ENCODE measurements at regions of chr19 and their contacts with region 1.

Region 1: GRCh38 chr19:17470068-17470841 is at the start of gene SLC27A1:
- DNase-seq: peak; percentile 98
- H3K4me3 ChIP-seq: peak within 1 kb of the TSS; percentile 93
- H3K27ac ChIP-seq: peak within 1 kb of the TSS; percentile 97
- H3K4me1 ChIP-seq: peaks cover 68% of the 10 kb centered on the region
- H3K27me3 ChIP-seq: no peaks in the 10 kb centered on the region
- CTCF ChIP-seq: no peak
- total RNA-seq, gene SLC27A1: 59.3 TPM

Region 2: DNA sequence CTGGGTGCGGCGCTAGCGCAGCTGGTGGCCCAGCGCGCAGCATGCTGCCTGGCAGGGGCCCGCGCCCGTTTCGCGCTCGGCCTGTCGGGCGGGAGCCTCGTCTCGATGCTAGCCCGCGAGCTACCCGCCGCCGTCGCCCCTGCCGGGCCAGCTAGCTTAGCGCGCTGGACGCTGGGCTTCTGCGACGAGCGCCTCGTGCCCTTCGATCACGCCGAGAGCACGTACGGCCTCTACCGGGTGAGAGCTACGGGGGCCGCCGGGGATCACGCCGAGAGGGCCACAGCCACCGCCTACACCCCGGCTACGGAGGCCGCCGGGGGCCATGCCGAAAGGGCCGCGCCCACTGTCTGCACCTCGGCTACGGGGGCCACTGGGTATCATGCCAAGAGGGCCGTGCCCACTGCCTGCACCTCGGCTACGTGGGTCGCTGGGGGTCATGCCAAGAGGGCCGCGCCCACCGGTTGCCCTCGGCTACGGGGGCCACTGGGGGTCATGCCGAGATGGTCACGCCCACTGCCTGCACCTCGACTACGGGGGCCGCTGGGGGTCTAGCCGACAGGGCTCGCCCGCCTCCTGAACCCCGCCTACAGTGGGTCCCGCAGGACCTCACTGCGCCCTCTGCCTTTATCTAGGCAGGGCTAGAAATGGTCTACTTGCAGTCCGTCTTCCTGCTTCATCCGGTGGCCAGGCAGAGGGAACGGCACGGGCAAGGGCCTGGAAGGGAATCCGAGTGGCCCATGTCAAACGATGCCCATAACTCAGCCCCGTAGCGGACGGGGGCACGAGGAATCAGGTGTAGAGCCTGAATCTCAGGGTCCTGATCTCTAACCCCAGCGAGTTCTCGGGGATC is 41.7 kb after region 1 on chr19:
- intact Hi-C with region 1: loop called (anchors 2 kb)
- DNase-seq: peak; percentile 89
- H3K4me3 ChIP-seq: peak overlapping the region; percentile 91
- H3K27ac ChIP-seq: peak overlapping the region; percentile 99
- H3K4me1 ChIP-seq: peaks cover 53% of the 10 kb centered on the region
- H3K27me3 ChIP-seq: no peaks in the 10 kb centered on the region
- CTCF ChIP-seq: peak; percentile 44

Region 3: DNA sequence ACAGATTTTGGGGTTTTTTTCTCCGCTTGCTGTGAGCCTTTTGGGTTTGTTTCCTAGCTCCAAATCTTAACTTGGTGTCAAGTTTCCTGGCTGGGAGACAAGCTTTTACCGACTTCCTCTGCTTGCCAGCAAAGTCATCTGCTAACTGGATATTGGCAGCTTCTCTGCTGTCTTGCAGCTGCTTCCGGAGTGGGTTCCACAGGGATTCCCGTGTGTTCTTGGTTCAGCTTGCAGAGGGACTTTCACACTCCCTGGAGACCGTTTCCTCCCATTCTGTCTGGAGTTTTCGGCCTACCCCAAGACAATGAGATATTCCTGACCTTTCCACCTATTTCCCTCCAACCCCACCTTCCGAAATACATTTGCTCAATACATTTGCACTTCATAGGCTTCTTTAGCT is 83.0 kb after region 1 on chr19:
- intact Hi-C with region 1: no loop called
- DNase-seq: peak; percentile 73
- H3K4me3 ChIP-seq: no peak overlapping the region
- H3K27ac ChIP-seq: peak overlapping the region; percentile 88
- H3K4me1 ChIP-seq: peaks cover 51% of the 10 kb centered on the region
- H3K27me3 ChIP-seq: no peaks in the 10 kb centered on the region
- CTCF ChIP-seq: no peak

Measured in left ventricle myocardium inferior (tissue), 1 donor.